Activated CD4-positive, alpha-beta T cell treated with anti-CD3 and anti-CD28 coated beads for 36 hours (primary cell): ENCODE measurements at regions of chr3 and their contacts with region 1.

Region 1: DNA sequence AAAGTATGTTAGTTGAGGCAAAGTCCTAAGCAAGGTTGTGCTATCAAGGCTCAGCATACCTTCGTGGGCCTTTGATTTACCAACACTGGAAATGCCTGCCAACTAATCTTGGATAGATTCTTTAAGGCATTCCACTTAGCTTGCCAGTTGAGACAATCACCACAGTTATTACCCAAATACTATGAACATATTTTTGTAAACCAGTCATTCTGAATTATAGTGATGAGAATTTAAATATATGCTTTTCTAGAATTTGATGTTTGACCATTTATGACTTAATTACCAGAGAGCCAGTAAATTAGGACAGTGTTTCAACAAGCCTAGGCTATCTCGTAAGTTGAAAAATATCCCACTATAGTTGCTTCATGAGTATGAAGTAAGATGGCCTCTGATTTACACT is 15.5 kb downstream of the TRIM59 start:
- DNase-seq: no peak
- ATAC-seq: no peak
- H3K4me3 Mint-ChIP-seq: no peak overlapping the region
- H3K27ac Mint-ChIP-seq: no peak overlapping the region
- H3K4me1 Mint-ChIP-seq: peaks cover 23% of the 10 kb centered on the region
- H3K27me3 Mint-ChIP-seq: no peaks in the 10 kb centered on the region

Region 2: GRCh38 chr3:161239703-161240102 is 805.6 kb after region 1 on chr3:
- CTCF ChIA-PET with region 1: no interaction called
- POLR2A ChIA-PET with region 1: no interaction called
- intact Hi-C with region 1: loop called in 1 of 2 experiments (anchors 5 kb)
- DNase-seq: no peak
- ATAC-seq: no peak
- H3K4me3 Mint-ChIP-seq: no peak overlapping the region
- H3K27ac Mint-ChIP-seq: no peak overlapping the region
- H3K4me1 Mint-ChIP-seq: peaks cover 4% of the 10 kb centered on the region
- H3K27me3 Mint-ChIP-seq: no peaks in the 10 kb centered on the region